ENCODE measurements at regions of chr17 and their contacts with region 1.

Region 1: GRCh38 chr17:4249452-4250029 is 14.2 kb downstream of the ANKFY1 start:
- DNase-seq: no peak
- H3K4me3 ChIP-seq: no peak overlapping the region
- H3K27ac ChIP-seq: no peak overlapping the region
- H3K4me1 ChIP-seq: peaks cover 32% of the 10 kb centered on the region
- H3K27me3 ChIP-seq: no peaks in the 10 kb centered on the region
- CTCF ChIP-seq: peak; percentile 71

Region 2: DNA sequence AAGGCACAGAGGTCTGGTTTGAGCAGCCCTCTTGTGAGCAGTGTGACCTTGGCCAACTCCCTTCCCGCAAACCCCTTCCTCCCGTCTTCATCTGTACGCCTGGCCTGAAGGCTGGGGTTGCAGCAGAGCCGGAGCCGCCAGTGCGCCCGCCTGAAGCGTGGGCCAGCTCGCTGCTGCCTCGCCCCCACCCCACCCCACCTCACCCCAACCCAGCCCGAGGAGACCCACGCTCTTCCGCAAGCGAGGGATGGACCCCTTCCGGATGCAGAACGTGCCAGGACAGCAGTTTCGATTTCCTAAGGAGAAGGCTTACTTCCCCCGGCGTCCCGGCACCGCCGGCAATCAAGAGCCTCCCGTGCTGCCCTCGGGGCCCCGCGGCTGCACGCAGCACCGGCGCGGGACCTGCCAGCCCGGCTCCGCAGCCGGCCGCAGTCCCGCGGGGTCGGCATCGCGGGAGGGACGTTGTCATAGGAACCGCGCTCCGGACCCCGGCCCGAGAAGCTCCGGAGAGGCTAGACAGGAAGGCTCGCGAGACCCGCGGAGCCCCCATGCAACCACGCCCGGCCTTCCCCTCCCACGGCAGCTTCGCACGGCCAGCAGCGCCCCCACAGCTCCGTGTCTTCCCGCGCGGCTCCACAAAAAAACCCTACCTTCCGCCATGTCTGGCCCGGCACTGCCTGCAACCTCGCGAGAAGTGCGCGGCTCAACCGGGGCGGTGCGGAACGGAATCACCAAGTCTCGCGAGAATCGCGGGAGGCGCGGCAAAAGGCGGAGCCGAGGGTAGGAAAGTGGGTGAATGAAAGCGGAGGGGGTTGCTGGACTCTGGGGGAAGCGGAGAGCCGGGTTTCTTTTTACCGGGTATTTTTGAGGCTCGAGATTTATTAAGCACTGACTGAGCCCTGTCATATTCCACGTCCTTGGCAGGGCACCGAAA is 14.0 kb after region 1 on chr17 and contains the start of gene ANKFY1:
- CTCF ChIA-PET with region 1: interaction called, 3 read pairs
- POLR2A ChIA-PET with region 1: interaction called, 3 read pairs
- intact Hi-C with region 1: loop called (anchors 1 kb)
- DNase-seq: peak; percentile 85 to 98
- H3K4me3 ChIP-seq: peak within 1 kb of the TSS; percentile 64
- H3K27ac ChIP-seq: peak within 1 kb of the TSS; percentile 46
- H3K4me1 ChIP-seq: peaks cover 14% of the 10 kb centered on the region
- H3K27me3 ChIP-seq: no peaks in the 10 kb centered on the region
- CTCF ChIP-seq: no peak
- total RNA-seq, gene ANKFY1: 63.9 and 74.5 TPM in 2 replicates

Region 3: GRCh38 chr17:4329838-4330237 is 80.3 kb after region 1 on chr17:
- CTCF ChIA-PET with region 1: interaction called, 6 read pairs
- POLR2A ChIA-PET with region 1: interaction called, 11 read pairs
- intact Hi-C with region 1: no loop called
- DNase-seq: peak; percentile 37 to 96
- H3K4me3 ChIP-seq: peak overlapping the region; percentile 29; the same call in 1 of the 2 replicates
- H3K27ac ChIP-seq: peak overlapping the region; percentile 85
- H3K4me1 ChIP-seq: peaks cover 69% of the 10 kb centered on the region
- H3K27me3 ChIP-seq: no peaks in the 10 kb centered on the region
- CTCF ChIP-seq: no peak

Region 4: GRCh38 chr17:4375039-4375748 is 125.7 kb after region 1 on chr17:
- CTCF ChIA-PET with region 1: no interaction called
- POLR2A ChIA-PET with region 1: no interaction called
- intact Hi-C with region 1: no loop called
- DNase-seq: no peak
- H3K4me3 ChIP-seq: no peak overlapping the region
- H3K27ac ChIP-seq: no peak overlapping the region
- H3K4me1 ChIP-seq: peaks cover 26% of the 10 kb centered on the region
- H3K27me3 ChIP-seq: no peaks in the 10 kb centered on the region
- CTCF ChIP-seq: no peak

Region 5: DNA sequence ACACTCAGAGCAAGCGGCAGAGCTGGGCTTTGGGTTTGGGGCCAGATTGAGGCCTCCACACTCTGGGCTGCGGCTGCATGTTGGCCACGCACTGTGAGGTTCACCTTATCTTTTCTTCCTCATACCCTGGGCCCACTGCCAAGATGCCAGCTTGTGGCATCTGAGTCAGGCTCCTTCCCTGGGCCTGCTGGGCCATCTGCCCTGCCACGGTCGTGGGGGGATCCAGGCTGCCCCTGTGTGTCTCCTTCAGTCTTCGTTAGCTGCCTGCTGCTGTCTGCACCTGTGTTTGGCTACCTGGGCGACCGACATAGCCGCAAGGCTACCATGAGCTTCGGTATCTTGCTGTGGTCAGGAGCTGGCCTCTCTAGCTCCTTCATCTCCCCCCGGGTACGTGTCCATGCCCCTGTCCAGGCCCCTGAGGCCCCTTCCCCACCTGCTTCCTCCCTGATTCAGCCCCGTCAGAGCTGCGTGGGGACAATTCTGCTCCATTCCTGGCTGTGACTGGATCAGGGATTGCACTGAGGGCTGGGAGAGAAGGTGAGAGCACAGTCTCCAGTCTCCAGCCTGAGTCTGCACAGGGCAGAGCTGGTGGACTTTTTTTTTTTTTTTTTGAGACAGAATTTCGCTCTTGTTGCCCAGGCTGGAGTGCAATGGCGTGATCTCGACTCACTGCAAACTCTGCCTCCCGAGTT is 195.4 kb after region 1 on chr17:
- CTCF ChIA-PET with region 1: no interaction called
- POLR2A ChIA-PET with region 1: interaction called, 13 read pairs
- intact Hi-C with region 1: no loop called
- DNase-seq: peak; percentile 79 to 90
- H3K4me3 ChIP-seq: no peak overlapping the region
- H3K27ac ChIP-seq: no peak overlapping the region
- H3K4me1 ChIP-seq: peaks cover 27% of the 10 kb centered on the region
- H3K27me3 ChIP-seq: no peaks in the 10 kb centered on the region
- CTCF ChIP-seq: no peak

Region 6: DNA sequence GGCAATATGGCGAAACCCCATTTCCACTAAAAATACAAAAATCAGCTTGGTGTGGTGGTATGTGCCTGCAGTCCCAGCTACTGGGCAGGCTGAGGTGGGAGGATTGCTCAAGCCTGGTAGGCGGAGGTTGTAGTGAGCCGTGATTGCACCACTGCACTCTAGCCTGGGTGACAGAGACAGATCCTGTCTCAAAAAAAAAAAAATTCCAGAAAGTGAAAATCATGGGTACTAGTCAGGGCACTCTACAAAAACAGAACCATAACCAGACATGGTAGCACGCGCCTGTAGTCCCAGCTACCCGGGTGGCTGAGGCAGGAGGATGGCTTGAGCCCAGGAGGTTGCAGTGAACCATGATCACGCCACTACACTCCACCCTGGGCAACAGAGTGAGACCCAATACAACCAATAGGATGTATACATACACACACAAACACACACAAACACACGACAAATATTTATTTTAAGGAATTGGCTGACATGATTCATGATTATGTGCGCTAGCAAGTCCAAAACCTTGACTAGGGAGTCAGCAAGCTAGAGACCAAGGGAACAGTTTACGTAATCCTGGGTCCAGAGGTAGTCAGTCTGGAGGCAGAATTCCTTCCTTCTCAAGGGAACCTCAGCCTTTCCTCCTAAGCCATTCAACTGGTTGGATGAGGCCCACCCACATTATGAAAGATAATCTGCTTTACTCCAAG is 671.0 kb after region 1 on chr17:
- CTCF ChIA-PET with region 1: interaction called, 7 read pairs
- POLR2A ChIA-PET with region 1: interaction called, 12 read pairs
- intact Hi-C with region 1: no loop called
- DNase-seq: no peak
- H3K4me3 ChIP-seq: no peak overlapping the region
- H3K27ac ChIP-seq: no peak overlapping the region
- H3K4me1 ChIP-seq: no peaks in the 10 kb centered on the region
- H3K27me3 ChIP-seq: no peaks in the 10 kb centered on the region
- CTCF ChIP-seq: no peak

Measured in PC-9 (cell line).